ENCODE measurements at regions of chr6 and their contacts with region 1.

Region 1: GRCh38 chr6:157569543-157569942 is 188.6 kb downstream of the ZDHHC14 start:
- DNase-seq: peak; percentile 71
- H3K4me3 Mint-ChIP-seq: peak overlapping the region; percentile 54
- H3K27ac Mint-ChIP-seq: no peak overlapping the region
- H3K4me1 Mint-ChIP-seq: peaks cover 23% of the 10 kb centered on the region
- H3K27me3 Mint-ChIP-seq: peaks cover 5% of the 10 kb centered on the region

Region 2: GRCh38 chr6:157443066-157443800 is 126.3 kb before region 1 on chr6:
- intact Hi-C with region 1: loop called (anchors 5 kb)
- DNase-seq: peak; percentile 67
- H3K4me3 Mint-ChIP-seq: no peak overlapping the region
- H3K27ac Mint-ChIP-seq: peak overlapping the region; percentile 74
- H3K4me1 Mint-ChIP-seq: peaks cover 19% of the 10 kb centered on the region
- H3K27me3 Mint-ChIP-seq: no peaks in the 10 kb centered on the region

Region 3: DNA sequence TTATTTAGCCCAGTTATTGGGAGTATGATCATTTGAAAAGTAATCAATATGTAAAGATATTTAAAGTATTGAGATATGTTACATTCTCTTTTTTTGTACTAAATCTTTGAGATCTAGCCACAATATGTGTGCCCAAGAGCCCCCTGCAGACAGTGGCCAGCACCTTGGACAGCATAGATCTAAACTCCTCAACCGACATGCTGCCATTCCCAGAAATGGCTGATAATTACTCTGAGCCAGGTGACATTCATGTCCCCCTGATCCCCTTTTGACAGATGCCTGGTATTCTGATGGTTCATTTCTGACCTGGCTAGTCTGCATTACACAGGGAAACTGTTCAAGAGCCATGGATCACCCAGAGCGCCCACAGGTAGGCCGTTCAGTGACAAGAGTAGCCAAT is 11.5 kb before region 1 on chr6:
- intact Hi-C with region 1: loop called (anchors 1 kb)
- DNase-seq: no peak
- H3K4me3 Mint-ChIP-seq: no peak overlapping the region
- H3K27ac Mint-ChIP-seq: no peak overlapping the region
- H3K4me1 Mint-ChIP-seq: peaks cover 46% of the 10 kb centered on the region
- H3K27me3 Mint-ChIP-seq: peaks cover 11% of the 10 kb centered on the region

Region 4: DNA sequence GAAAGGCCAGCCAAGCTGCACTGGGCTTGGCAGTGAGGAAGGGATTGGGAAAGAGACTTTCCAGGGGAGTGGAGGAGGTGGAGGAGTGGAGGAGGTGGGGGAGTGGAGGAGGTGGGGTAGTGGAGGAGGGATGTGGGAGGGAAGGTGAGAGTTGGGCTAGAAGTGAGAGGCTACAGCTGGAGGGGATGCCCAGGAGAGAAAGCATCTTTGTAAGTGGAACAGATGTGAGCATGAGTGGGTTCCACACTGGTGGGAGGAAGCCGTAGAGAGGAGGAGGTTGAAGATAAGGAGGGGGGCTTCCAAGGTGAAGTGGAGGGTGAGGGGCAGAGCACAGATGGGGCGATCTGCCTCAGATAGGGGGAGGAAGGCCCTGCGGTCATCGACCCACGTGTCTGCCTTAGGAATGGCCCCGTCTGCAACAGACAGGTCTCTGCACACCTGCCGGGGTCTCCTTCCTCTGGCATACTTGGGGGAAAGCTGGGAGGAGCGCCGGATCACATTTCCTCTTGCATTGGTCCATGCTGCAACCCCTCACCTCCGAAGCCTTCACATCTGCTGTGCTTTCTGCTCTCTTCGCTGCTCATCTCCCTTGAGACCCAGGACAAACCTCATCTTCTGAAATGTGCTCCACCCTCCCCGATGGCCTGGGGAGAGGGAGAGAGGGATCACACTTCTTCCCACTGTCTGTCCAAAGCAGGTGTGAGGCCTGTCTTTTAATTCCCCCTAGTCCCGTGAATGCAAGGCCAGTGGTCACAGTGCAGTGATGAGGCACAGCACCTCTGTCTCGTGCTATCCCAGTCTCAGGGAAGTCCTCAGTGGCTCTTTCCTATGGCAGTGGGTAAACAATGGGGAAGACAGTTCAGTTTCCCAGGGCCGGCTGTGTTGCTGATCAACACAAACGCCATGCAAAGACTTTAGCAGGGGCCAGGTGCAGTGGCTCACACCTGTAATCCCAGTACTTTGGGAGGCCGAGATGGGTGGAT is 204.9 kb after region 1 on chr6:
- intact Hi-C with region 1: no loop called
- DNase-seq: no peak
- H3K4me3 Mint-ChIP-seq: no peak overlapping the region
- H3K27ac Mint-ChIP-seq: peak overlapping the region; percentile 73
- H3K4me1 Mint-ChIP-seq: peaks cover 12% of the 10 kb centered on the region
- H3K27me3 Mint-ChIP-seq: peaks cover 41% of the 10 kb centered on the region

Measured in activated CD4-positive, alpha-beta T cell treated with anti-CD3 and anti-CD28 coated beads, Interleukin-2, amount 10 ng/mL, durations not matched to agents 24 days and 14 days (primary cell).